Esophagus muscularis mucosa (tissue), 4 donors: ENCODE measurements at regions of chr16 and their contacts with region 1.

Region 1: DNA sequence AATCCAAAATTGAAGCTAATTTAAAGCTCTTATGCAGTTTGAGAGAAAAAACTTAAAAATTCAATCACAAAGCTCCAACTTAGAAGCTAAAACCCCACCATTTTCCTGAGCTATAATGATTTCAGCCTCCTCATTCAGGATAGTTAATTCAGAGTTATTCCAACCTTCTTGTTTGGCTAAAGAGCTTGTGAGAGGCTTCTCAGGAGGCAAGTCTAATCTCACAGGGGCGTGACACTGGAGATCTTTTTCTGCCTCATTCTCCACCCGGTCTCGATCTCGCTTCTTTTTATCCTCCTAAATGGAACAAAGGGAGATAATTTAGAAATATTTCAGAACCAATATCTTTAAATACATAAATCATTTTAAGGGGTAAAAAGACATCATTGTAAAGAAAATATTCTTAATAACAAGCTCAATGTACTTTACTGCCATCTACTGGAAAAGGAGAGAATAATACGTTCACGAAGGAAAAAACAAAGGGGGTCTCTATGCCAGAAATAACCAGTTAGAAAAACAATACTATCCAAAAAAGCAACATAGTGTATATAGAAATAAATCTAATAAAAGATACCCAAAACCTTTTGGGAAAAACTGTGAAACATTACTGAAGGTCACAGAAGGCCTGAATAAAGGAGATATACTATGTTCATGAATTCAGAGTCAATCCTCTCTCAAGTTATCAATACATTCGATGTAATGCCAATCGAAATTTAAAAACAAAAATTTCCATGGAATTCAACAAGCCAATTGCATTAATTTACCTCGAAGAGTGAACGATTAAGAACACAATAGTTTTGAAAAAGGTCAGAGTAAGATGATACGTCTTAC is 13.9 kb downstream of the BRD7 start:
- DNase-seq: no peak
- H3K4me3 ChIP-seq: no peak overlapping the region
- H3K27ac ChIP-seq: peak overlapping the region in 2 of 4 donors; percentile 24 to 25
- H3K4me1 ChIP-seq: peaks cover 0 to 25% (median 16%) of the 10 kb centered on the region in 4 donors
- H3K27me3 ChIP-seq: no peaks in the 10 kb centered on the region
- CTCF ChIP-seq: peak; percentile 64 to 72 (median 72)
- EP300 ChIP-seq: no peak
- POLR2A ChIP-seq: no peak

Region 2: GRCh38 chr16:50002190-50002589 is 352.7 kb before region 1 on chr16:
- intact Hi-C with region 1: no loop called
- DNase-seq: no peak
- H3K4me3 ChIP-seq: no peak overlapping the region
- H3K27ac ChIP-seq: no peak overlapping the region
- H3K4me1 ChIP-seq: no peaks in the 10 kb centered on the region
- H3K27me3 ChIP-seq: no peaks in the 10 kb centered on the region
- CTCF ChIP-seq: no peak
- EP300 ChIP-seq: no peak
- POLR2A ChIP-seq: no peak

Region 3: DNA sequence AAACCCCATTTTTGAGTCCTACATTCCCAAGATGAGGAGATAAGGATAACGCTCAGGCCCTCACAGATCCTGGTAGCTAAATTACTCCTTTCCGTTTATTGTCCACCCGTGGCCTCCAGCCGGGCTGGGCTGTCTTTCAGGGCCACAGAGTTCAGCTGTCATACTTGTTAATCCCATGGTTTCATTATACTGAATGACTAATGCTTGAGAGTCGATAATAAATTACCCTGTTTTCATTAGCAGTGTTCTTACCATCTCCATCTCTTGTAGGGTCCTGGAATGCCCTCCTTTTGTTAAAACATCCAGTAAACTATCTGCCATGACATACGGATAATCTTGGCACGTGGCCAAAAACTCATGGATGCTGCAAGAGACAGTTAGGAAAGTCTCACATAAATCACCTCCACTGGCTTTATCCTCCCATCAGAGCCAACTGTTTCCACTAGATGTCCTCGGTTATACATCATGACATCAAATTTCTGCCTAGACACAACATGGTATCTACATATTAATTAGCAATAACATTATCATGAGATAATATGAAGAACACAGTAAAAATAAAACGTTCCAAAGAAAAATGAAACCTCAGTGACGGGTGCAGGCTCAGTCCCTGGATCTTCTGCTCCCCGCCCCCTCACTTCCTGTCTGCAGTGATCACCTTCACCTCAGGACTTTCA is 31.4 kb before region 1 on chr16:
- intact Hi-C with region 1: loop called (anchors 5 kb)
- DNase-seq: no peak
- H3K4me3 ChIP-seq: no peak overlapping the region
- H3K27ac ChIP-seq: peak overlapping the region; percentile 24 to 49 (median 31)
- H3K4me1 ChIP-seq: peaks cover 0 to 25% (median 16%) of the 10 kb centered on the region in 4 donors
- H3K27me3 ChIP-seq: no peaks in the 10 kb centered on the region
- CTCF ChIP-seq: peak in 1 of 3 experiments; percentile 25
- EP300 ChIP-seq: no peak
- POLR2A ChIP-seq: no peak

Region 4: DNA sequence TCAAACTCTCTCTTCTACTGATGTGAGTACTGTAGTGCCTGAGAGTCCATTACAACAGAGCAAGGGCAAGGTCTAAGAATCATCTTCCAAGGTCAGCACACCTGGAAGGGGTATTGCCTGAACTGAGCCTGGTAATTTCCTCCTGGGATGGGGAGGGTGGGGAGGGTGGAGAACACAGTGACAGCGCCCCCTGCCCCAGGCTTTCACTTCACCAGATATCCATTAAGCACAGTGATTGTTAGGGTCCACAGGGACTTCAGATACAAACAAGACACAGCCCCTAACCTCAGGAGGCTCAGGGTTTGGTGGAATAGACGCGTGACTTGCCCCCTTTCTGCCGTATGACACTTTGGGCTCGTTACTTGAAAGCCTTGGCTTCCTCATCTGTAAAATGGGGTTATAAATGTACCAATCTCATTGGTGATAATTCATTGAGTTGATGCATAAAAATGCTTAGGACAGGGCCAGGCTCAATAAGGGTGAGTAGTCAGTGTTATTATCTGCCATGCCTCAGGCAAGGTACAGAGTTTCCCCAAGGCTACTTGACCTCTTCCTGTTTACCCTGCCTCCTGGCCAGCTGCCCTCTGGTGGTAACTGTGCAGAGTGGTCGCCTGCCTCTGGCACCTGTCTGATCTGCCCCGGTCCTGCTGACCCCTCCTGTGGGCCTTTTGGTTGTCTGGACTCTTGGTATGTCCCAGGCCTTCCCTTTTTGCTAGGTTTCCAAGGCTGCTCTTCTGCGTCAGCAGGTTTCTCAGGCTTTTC is 27.0 kb after region 1 on chr16:
- intact Hi-C with region 1: no loop called
- DNase-seq: no peak
- H3K4me3 ChIP-seq: no peak overlapping the region
- H3K27ac ChIP-seq: no peak overlapping the region
- H3K4me1 ChIP-seq: no peaks in the 10 kb centered on the region
- H3K27me3 ChIP-seq: no peaks in the 10 kb centered on the region
- CTCF ChIP-seq: no peak
- EP300 ChIP-seq: no peak
- POLR2A ChIP-seq: no peak